Ovary (tissue), 10 donors: ENCODE measurements at regions of chr1 and their contacts with region 1.

Region 1: DNA sequence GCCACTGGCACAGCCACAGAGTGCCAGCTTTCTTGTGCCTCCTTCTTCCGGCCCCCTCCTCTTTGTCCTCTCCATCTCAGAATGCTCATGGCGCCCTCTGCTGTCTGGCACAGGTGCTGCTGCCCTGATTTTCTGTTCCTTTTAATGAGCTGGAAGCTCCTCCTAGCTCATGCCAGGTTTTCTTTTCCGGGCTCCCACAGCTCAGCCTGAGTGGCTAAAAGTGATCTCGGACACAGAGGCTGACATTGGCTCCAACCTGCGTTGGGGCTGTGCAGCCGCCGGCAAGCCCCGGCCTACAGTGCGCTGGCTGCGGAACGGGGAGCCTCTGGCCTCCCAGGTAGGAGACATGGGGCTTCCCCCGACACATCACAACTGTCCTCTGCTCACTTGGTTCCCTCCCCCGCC is 18.7 kb downstream of the CNTN2 start:
- DNase-seq: peak; percentile 48 to 84 (median 82)
- H3K4me3 ChIP-seq: no peak overlapping the region
- H3K27ac ChIP-seq: no peak overlapping the region
- H3K4me1 ChIP-seq: no peaks in the 10 kb centered on the region
- H3K27me3 ChIP-seq: no peaks in the 10 kb centered on the region
- CTCF ChIP-seq: peak; percentile 68 to 79 (median 70)
- EP300 ChIP-seq: no peak
- POLR2A ChIP-seq: no peak

Region 2: GRCh38 chr1:204980840-204981405 is 80.7 kb before region 1 on chr1:
- intact Hi-C with region 1: loop called in 3 of 4 experiments (anchors 5 kb)
- DNase-seq: no peak
- H3K4me3 ChIP-seq: no peak overlapping the region
- H3K27ac ChIP-seq: no peak overlapping the region
- H3K4me1 ChIP-seq: no peaks in the 10 kb centered on the region
- H3K27me3 ChIP-seq: no peaks in the 10 kb centered on the region
- CTCF ChIP-seq: no peak
- EP300 ChIP-seq: no peak
- POLR2A ChIP-seq: no peak